ENCODE measurements at regions of chr6 and their contacts with region 1.

Region 1: DNA sequence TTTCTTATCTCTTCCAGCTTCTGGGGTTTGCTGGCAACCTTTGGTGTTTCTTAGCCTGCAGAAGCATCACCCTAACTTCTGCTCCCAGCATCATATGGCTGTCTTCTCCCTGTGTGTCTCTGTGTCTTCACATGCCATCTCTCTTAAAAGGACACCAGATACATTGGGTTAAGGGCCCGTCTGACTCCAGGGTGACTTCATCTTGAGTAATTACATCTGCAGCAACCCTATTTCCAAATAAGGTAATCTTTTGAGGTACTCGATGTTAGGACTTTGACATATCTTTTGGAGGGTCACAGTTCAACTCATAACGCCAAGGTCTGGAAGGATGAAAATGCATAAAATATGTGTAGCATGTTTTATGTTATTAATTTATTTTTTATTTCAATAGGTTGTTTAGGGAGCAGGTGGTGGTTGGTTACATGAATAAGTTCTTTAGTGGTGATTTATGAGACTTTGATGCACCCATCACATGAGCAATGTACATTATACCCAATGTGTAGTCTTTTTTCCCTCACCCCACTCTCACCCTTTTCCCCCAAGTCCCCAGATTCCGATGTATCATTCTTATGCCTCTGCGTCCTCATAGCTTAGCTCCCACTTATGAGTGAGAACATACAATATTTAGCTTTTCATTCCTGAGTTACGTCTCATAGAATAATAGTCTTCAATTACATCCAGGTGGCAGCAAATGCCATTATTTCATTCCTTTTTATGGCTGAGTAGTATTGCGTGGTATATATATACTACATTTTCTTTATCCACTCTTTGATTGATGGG is 131.1 kb downstream of the TBXT start:
- DNase-seq: no peak
- H3K4me3 ChIP-seq: no peak overlapping the region
- H3K27ac ChIP-seq: no peak overlapping the region
- H3K4me1 ChIP-seq: no peaks in the 10 kb centered on the region
- H3K27me3 ChIP-seq: no peaks in the 10 kb centered on the region
- CTCF ChIP-seq: no peak
- EP300 ChIP-seq: no peak
- POLR2A ChIP-seq: no peak

Region 2: GRCh38 chr6:164409309-164410009 is 1627.0 kb before region 1 on chr6:
- intact Hi-C with region 1: loop called in 1 of 4 experiments (anchors 5 kb)
- DNase-seq: no peak
- H3K4me3 ChIP-seq: no peak overlapping the region
- H3K27ac ChIP-seq: no peak overlapping the region
- H3K4me1 ChIP-seq: no peaks in the 10 kb centered on the region
- H3K27me3 ChIP-seq: no peaks in the 10 kb centered on the region
- CTCF ChIP-seq: no peak
- EP300 ChIP-seq: no peak
- POLR2A ChIP-seq: no peak

Region 3: GRCh38 chr6:166097915-166098522 is 61.5 kb after region 1 on chr6:
- intact Hi-C with region 1: no loop called
- DNase-seq: peak; percentile 70 to 91 (median 84)
- H3K4me3 ChIP-seq: peak overlapping the region; percentile 25
- H3K27ac ChIP-seq: no peak overlapping the region
- H3K4me1 ChIP-seq: no peaks in the 10 kb centered on the region
- H3K27me3 ChIP-seq: no peaks in the 10 kb centered on the region
- CTCF ChIP-seq: peak; percentile 78 to 87 (median 81)
- EP300 ChIP-seq: no peak
- POLR2A ChIP-seq: no peak

Measured in ovary (tissue), 10 donors.